Right ventricle myocardium inferior (tissue), 1 donor: ENCODE measurements at regions of chr1 and their contacts with region 1.

Region 1: DNA sequence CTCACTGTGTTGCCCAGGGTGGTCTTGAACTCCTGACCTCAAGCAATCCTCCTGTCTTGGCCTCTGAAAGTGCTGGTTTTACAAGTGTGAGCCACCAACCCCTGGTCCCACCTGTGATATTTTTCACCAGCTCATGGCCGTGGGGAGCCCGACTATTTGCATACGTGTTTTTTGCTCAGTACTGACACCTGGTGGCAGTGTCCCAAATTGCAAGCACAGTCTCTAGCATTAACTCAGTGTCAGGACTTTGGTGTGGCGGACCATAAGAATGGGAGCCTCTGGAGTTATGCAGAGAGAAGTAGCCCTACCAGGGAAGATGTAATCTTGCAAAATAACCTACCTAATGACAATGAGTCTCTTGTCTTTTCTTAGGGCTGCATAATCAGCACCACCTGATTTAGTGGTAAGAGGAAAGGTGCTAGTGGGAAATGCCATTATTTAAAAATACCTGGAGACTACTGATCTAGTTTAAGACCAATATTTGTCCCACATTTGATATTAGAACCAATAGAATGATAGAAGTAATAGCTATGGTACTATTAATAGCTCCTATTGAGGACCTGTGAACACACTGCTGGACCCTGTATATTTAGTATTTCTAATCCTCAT is 305.4 kb downstream of the DISC1 start:
- DNase-seq: no peak
- ATAC-seq: no peak

Region 2: DNA sequence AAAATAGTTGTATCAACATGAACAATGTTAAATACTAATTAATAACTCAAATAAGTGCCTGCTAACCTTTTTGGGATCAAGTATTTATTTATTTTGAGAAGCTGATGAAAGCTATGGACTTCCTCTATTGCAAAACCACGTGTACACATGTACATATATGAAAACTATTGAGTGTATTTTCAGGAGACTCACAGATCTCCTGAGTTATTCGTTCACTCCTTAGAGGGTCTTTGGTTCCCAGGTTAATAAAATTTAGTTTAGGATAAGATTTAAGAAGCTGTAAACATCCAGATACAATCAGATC is 174.9 kb before region 1 on chr1:
- intact Hi-C with region 1: loop called (anchors 10 kb)
- DNase-seq: no peak
- ATAC-seq: no peak

Region 3: GRCh38 chr1:231844986-231845502 is 86.9 kb before region 1 on chr1:
- intact Hi-C with region 1: loop called (anchors 5 kb)
- DNase-seq: no peak
- ATAC-seq: no peak

Region 4: GRCh38 chr1:231866392-231867331 is 65.3 kb before region 1 on chr1:
- intact Hi-C with region 1: loop called (anchors 5 kb)
- DNase-seq: no peak
- ATAC-seq: no peak

Region 5: GRCh38 chr1:231983588-231984193 is 51.7 kb after region 1 on chr1:
- intact Hi-C with region 1: loop called (anchors 5 kb)
- DNase-seq: no peak
- ATAC-seq: no peak

Region 6: DNA sequence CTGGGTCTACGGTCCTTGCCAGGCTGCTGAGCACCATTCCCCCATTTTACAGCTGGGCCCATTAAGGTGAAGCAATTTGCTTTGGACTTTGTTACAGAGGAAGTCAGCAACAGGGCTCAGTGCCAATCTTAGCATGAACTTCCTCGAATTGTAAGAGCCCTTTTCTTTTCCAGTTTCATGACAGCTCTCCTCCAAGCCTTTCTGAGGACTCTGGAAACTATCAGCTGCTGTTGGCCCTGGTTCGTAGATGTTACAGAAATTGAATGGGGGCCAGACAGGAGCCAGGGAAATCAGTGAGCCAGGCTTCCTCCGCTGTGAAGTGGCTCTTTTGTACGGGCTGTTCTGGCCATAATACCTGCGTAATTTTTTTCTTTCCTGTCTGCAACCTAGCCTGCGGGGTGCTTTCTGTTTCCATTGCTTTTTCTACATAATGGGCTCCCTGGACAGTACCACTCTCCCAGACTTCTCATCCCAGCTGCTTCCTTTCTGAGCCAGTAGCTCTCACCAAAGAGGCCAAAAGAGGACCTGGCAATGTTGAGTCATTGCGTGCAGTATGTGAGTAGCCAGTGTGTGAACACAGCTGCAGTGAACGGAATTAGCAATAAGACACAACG is 80.9 kb after region 1 on chr1:
- intact Hi-C with region 1: loop called (anchors 5 kb)
- DNase-seq: no peak
- ATAC-seq: peak; percentile 95

Region 7: GRCh38 chr1:232620356-232620969 is 688.5 kb after region 1 on chr1:
- intact Hi-C with region 1: loop called (anchors 5 kb)
- DNase-seq: no peak
- ATAC-seq: peak; percentile 94